Testis (tissue), 5 donors: ENCODE measurements at regions of chr2 and their contacts with region 1.

Region 1: DNA sequence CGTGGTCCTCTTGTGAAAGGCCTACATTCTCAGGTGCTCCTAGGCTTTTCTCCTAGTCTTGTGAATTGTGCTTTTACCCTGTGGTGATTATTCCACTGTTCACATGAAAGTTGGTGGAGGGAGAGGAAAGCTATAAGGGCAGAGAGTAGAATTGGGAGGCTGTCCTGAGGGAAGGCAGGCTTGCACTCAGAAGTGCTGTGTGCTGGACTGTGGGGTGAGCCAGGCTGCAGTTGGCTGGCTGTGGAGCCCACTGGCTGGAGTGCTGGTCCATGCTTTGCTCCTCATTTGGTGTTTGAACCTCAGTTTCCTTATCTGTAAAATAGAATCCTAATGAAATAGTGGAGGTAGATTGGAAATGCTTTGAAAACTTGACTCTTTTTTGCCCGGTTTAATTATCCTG is 21.3 kb downstream of the LIMS1 start:
- DNase-seq: no peak
- H3K4me3 ChIP-seq: no peak overlapping the region
- H3K27ac ChIP-seq: no peak overlapping the region
- H3K4me1 ChIP-seq: peaks cover 7% of the 10 kb centered on the region
- H3K27me3 ChIP-seq: no peaks in the 10 kb centered on the region
- CTCF ChIP-seq: no peak
- POLR2A ChIP-seq: no peak

Region 2: GRCh38 chr2:107717661-107718060 is 837.9 kb before region 1 on chr2:
- intact Hi-C with region 1: loop called (anchors 5 kb)
- DNase-seq: no peak
- H3K4me3 ChIP-seq: no peak overlapping the region
- H3K27ac ChIP-seq: no peak overlapping the region
- H3K4me1 ChIP-seq: no peaks in the 10 kb centered on the region
- H3K27me3 ChIP-seq: no peaks in the 10 kb centered on the region
- CTCF ChIP-seq: no peak
- POLR2A ChIP-seq: no peak

Region 3: DNA sequence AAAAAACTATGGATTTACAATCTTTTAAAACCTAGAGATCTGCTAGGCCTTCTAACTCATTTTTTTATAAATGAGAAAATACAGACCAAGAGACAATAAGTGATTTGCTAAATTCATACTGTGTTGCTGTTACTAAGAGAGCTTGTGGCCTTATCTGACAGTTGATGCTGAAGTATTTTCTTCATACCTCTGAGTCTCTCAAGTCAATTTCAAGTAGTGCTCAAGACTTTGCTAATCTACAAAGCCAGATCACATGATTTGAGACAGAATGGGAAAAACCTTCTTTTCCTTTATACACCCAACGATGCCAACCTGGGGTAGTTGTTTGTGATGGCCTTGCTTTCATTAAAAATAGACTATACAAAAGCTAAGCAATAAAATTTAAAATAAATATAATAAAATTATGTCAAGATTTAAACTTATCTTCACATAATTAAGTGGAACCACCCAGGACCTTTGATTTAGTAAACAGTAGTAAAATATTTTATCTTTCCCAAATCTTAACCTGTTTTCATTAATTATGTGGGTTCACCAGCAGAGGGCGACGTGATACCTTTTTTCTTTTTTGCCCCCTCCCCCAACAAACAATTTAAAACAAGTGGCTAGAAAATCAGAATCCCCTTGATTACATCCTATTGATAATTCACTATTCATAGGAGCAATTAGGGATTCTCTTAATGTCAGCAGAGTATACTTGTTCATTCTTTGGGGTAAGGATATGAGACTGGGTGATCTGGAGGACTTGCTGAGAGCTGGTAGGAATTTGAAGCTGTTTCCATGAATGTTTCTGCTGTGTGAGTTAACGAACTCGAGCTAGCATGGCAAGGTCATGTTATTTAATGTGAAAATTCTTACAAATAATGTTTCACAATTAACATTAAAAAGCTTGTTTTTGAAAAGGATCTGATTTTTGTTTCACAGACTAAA is 618.9 kb before region 1 on chr2:
- intact Hi-C with region 1: no loop called
- DNase-seq: peak; percentile 20
- H3K4me3 ChIP-seq: no peak overlapping the region
- H3K27ac ChIP-seq: no peak overlapping the region
- H3K4me1 ChIP-seq: no peaks in the 10 kb centered on the region
- H3K27me3 ChIP-seq: no peaks in the 10 kb centered on the region
- CTCF ChIP-seq: peak; percentile 43 to 65 (median 55)
- POLR2A ChIP-seq: no peak